Motor neuron (in vitro differentiated cells): ENCODE measurements at regions of chr12 and their contacts with region 1.

Region 1: DNA sequence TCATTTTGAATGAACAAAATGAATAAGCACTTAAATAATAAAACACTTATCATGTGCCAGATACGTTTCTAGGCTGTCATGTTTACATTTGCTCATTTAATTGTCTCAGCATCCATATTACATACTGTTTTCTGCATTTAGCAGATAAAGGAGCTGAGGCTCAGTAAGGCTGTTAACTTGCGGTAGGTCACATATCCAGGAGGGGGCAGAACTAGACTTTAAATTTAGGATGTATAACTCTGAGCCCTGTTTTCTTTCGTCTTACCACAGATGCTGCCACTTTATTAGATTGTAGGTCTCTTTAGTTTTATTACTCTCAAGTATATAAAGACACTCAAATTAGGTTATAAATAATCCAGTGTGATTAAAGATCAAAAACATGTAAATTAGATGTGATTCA is 17.7 kb downstream of the IRAK4 start:
- ATAC-seq: peak in 4 of 8 experiments; percentile 34 to 90 (median 46)
- H3K4me3 ChIP-seq: no peak overlapping the region
- H3K27ac ChIP-seq: no peak overlapping the region
- H3K4me1 ChIP-seq: no peaks in the 10 kb centered on the region

Region 2: DNA sequence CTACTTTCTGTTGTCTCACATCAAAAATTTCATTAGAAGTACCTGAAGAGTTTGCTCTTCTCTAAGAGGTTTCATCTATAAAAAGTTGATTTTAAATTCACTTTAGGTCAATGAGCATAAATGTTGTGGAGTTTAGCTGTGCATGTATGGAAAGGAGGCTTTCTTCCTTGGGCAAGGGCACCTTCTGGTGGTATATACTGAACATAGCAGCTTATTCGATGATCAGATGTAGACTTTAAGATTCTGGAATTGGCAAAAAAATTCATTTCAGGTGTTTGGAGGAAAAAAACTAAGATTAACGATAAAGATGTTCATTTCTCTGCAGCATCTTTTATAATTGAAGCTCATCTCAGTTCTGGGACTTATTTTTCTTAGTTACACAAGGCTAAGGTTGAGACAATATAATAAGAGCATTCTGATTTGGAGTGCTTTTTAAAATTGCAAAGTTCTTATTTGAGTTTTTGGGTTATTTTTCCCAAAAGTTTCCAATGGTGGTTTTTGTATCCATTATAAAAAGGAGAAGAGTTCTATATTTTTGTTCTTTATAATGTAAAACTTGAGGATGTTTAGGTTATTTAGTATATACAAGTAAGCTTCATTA is 106.2 kb after region 1 on chr12:
- in situ Hi-C with region 1: loop called in 1 of 9 experiments (anchors 25 kb)
- ATAC-seq: peak in 7 of 8 experiments; percentile 45 to 86 (median 72)
- H3K4me3 ChIP-seq: no peak overlapping the region
- H3K27ac ChIP-seq: no peak overlapping the region
- H3K4me1 ChIP-seq: no peaks in the 10 kb centered on the region

Region 3: GRCh38 chr12:44584625-44585024 is 808.1 kb after region 1 on chr12:
- in situ Hi-C with region 1: no loop called
- ATAC-seq: peak in 5 of 8 experiments; percentile 58 to 77 (median 69)
- H3K4me3 ChIP-seq: no peak overlapping the region
- H3K27ac ChIP-seq: no peak overlapping the region
- H3K4me1 ChIP-seq: peaks cover 12 to 16% of the 10 kb centered on the region in 2 donors

Region 4: GRCh38 chr12:44717612-44718011 is 941.1 kb after region 1 on chr12:
- in situ Hi-C with region 1: no loop called
- ATAC-seq: no peak
- H3K4me3 ChIP-seq: no peak overlapping the region
- H3K27ac ChIP-seq: no peak overlapping the region
- H3K4me1 ChIP-seq: peaks cover 0 to 6% of the 10 kb centered on the region in 2 donors